Stomach (tissue), 19 donors: ENCODE measurements at regions of chr3 and their contacts with region 1.

Region 1: DNA sequence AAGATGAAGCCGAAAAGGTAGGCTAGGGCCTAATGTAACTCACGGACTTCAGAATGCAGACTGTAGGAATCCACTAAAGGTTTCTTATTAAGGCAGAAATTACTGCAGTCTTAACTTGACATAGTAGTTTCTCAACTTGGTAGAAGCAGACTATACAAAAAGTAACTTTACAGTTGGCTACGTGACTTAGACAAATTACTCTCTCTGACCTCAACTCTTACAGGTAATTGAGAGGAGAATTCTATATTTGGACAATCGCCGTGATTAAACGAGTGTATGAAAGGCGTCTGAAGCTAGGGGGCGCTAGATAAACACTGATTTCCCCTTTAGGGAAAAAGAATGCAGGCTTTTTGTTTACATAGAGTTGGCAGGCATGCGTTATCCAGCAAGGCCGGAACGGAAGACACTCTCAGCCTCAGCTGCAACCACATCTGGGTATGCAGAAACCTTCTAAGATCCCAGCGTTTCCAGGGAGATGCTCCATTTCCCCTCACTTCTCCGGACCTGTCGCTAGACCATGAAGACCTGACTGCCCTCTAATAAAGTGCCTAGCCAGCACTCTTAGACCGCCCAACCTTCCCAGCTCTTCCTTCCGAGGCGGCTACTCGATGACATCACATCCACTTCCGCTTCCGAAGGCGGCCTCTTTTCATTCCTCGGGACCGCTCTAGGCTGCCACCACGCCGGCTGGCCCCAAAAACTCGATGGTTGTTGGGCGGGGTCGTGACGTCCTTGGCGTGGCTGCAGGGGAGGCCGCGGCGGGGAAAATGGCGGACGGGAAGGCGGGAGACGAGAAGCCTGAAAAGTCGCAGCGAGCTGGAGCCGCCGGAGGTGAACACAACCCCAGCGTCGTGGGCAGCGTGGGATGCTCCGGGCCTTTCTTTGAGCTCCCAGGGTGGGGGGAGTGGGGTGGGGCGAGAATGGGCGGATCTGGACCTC is at the start of gene PCNP:
- DNase-seq: peak; percentile 98 to 100
- H3K4me3 ChIP-seq: peak within 1 kb of the TSS; percentile 85 to 96 (median 88)
- H3K27ac ChIP-seq: peak within 1 kb of the TSS; percentile 95 to 100 (median 99)
- H3K4me1 ChIP-seq: peaks cover 28 to 50% (median 43%) of the 10 kb centered on the region in 4 donors
- H3K27me3 ChIP-seq: no peaks in the 10 kb centered on the region
- CTCF ChIP-seq: peak in 6 of 7 experiments; percentile 70 to 94 (median 88)
- EP300 ChIP-seq: peak; percentile 9
- POLR2A ChIP-seq: peak in 2 of 4 donors; percentile 28 to 75
- total RNA-seq, gene PCNP: 21.7 to 163 (median 88.1) TPM

Region 2: DNA sequence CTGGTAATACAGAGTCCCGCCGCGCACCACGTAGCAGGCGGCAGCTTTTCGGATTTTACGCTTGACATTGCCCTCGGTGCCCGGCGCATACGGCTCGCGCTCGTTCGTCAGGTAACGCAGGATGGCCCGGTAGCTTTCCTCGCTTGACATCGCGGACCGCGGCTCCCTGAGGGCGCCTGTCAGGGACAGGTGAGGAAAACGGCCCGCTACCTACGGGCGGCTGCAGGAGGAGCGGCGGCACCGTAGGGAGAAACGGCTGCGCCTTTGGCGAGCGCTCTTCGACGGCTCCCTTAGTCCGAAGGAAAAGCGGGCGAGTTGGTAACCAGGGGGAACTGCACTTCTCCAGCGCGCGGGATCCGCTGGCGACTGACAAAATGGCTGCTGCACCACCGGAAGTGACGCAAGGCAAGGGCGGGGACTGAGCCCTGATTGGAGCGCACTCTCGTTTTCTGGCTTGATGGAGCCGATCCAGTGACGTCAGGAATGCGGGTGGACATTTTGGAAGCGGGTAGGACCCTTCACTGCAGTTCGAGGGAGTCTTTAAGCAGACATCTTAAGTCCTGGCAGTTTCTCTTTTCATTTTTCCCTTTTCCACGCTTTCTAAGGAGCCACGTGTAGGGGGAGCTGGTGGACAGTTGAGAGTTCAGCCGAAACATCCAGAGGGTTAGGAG is 103.2 kb after region 1 on chr3 and contains the start of gene ZBTB11:
- intact Hi-C with region 1: loop called (anchors 10 kb)
- DNase-seq: peak; percentile 100
- H3K4me3 ChIP-seq: peak within 1 kb of the TSS; percentile 92 to 99 (median 95)
- H3K27ac ChIP-seq: peak within 1 kb of the TSS; percentile 98 to 99 (median 99)
- H3K4me1 ChIP-seq: peaks cover 23 to 63% (median 45%) of the 10 kb centered on the region in 4 donors
- H3K27me3 ChIP-seq: no peaks in the 10 kb centered on the region
- CTCF ChIP-seq: peak in 2 of 7 experiments; percentile 31 to 35
- EP300 ChIP-seq: no peak
- POLR2A ChIP-seq: peak in 2 of 4 donors; percentile 33 to 78
- total RNA-seq, gene ZBTB11: 6.7 to 31.2 (median 28.3) TPM